Activated naive CD4-positive, alpha-beta T cell treated with anti-CD3 and anti-CD28 coated beads for 36 hours (primary cell): ENCODE measurements at regions of chr1 and their contacts with region 1.

Region 1: GRCh38 chr1:231357831-231358354 is 19.8 kb downstream of the SPRTN start:
- DNase-seq: peak; percentile 45
- H3K4me3 Mint-ChIP-seq: no peak overlapping the region
- H3K27ac Mint-ChIP-seq: peak overlapping the region; percentile 16
- H3K4me1 Mint-ChIP-seq: peaks cover 4% of the 10 kb centered on the region
- H3K27me3 Mint-ChIP-seq: no peaks in the 10 kb centered on the region

Region 2: GRCh38 chr1:231124746-231125145 is 233.1 kb before region 1 on chr1:
- CTCF ChIA-PET with region 1: no interaction called
- intact Hi-C with region 1: no loop called
- DNase-seq: no peak
- H3K4me3 Mint-ChIP-seq: no peak overlapping the region
- H3K27ac Mint-ChIP-seq: no peak overlapping the region
- H3K4me1 Mint-ChIP-seq: no peaks in the 10 kb centered on the region
- H3K27me3 Mint-ChIP-seq: no peaks in the 10 kb centered on the region

Region 3: DNA sequence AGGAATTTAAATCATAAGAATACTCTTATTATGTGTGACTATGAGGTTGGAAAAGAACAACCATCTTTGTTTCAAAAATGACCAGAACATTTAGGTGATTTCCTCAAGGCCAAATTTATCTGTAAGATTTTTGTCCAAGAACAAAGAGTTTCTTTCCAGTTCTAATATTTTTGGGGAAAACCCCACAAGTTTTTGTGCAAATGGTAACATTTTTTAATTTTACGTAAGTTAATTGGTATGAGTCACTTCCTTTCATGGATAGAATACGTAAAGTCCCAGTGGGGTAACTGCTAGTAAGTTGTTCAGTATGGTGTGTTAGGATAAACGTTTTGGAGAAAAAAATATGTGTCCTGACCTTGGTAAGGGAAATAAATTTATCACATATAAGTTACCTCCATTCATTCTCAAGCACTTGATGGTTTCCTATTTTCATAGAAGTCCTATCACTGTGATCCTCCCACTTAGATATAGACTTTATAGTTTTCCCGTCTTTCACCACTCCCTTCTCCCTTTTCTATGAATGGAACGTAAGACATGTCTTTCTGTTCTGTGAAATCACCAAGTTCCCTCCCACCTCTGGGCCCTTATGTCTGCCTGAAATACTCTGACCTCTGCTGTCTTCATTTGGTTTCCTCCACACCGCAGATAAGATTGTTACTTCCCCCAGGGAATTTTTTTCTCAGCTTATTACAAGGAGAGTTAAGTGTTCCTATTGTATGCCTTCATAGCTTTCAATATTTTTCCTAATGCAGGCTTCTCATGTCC is 135.7 kb after region 1 on chr1:
- CTCF ChIA-PET with region 1: no interaction called
- intact Hi-C with region 1: loop called (anchors 2 kb)
- DNase-seq: peak; percentile 35
- H3K4me3 Mint-ChIP-seq: peak overlapping the region; percentile 32
- H3K27ac Mint-ChIP-seq: peak overlapping the region; percentile 70
- H3K4me1 Mint-ChIP-seq: peaks cover 14% of the 10 kb centered on the region
- H3K27me3 Mint-ChIP-seq: peaks cover 7% of the 10 kb centered on the region

Region 4: GRCh38 chr1:231584124-231584523 is 226.2 kb after region 1 on chr1:
- CTCF ChIA-PET with region 1: interaction called, 25 read pairs
- intact Hi-C with region 1: loop called (anchors 1 kb)
- DNase-seq: peak; percentile 12
- H3K4me3 Mint-ChIP-seq: no peak overlapping the region
- H3K27ac Mint-ChIP-seq: no peak overlapping the region
- H3K4me1 Mint-ChIP-seq: no peaks in the 10 kb centered on the region
- H3K27me3 Mint-ChIP-seq: no peaks in the 10 kb centered on the region

Region 5: GRCh38 chr1:231590453-231591198 is 232.7 kb after region 1 on chr1:
- CTCF ChIA-PET with region 1: interaction called, 25 read pairs
- intact Hi-C with region 1: loop called (anchors 1 kb)
- DNase-seq: peak; percentile 68
- H3K4me3 Mint-ChIP-seq: no peak overlapping the region
- H3K27ac Mint-ChIP-seq: no peak overlapping the region
- H3K4me1 Mint-ChIP-seq: peaks cover 6% of the 10 kb centered on the region
- H3K27me3 Mint-ChIP-seq: no peaks in the 10 kb centered on the region